CD8-positive, alpha-beta T cell (primary cell): ENCODE measurements at regions of chr1 and their contacts with region 1.

Region 1: DNA sequence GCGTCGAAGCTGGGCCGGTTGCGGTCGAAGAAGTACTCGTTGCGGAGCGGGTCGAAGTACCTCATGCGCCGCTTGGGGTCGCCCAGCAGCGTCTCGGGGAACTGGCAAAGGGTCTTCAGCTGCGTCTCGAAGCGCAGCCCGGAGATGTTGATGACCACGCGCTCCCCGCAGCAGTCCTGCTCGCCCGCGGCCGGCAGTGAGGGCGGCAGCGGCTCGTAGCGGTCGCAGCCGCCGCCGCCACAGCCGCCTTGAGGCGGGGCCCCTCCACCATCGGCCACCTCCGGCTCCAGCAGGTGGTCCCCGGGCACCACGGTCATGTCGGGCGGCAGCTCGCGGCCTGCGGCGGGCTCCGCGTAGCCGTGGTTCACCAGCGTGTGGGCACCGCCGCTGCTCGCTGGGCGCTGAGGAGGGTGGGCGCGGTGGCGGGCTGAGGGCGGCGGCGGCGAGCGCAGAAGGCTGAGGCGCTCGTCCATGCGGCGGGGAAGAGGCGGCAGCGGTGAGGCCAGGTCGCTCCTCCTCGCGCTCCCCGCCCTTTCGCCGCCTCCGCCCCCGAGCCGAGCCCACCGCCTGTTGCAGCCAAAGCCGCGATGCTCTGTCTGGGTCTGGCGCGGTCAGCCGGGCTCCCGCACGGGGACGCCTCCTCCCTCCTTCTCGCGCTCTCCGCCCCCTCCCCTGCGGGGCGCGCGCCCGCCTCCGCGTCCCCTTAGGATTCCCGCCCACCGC is at the start of gene KCNA3:
- DNase-seq: peak; percentile 52 to 87 (median 73)
- ATAC-seq: peak; percentile 42
- H3K4me3 ChIP-seq: peak within 1 kb of the TSS; percentile 75 to 97
- H3K4me3 Mint-ChIP-seq: peak within 1 kb of the TSS; percentile 100
- H3K27ac ChIP-seq: peak within 1 kb of the TSS; percentile 93 to 95
- H3K27ac Mint-ChIP-seq: peak within 1 kb of the TSS; percentile 99
- H3K4me1 ChIP-seq: peaks cover 22% of the 10 kb centered on the region
- H3K4me1 Mint-ChIP-seq: peaks cover 40% of the 10 kb centered on the region
- H3K27me3 ChIP-seq: no peaks in the 10 kb centered on the region
- H3K27me3 Mint-ChIP-seq: no peaks in the 10 kb centered on the region
- CTCF ChIP-seq: peak; percentile 28
- total RNA-seq, gene KCNA3: 83.6 to 85.1 TPM

Region 2: DNA sequence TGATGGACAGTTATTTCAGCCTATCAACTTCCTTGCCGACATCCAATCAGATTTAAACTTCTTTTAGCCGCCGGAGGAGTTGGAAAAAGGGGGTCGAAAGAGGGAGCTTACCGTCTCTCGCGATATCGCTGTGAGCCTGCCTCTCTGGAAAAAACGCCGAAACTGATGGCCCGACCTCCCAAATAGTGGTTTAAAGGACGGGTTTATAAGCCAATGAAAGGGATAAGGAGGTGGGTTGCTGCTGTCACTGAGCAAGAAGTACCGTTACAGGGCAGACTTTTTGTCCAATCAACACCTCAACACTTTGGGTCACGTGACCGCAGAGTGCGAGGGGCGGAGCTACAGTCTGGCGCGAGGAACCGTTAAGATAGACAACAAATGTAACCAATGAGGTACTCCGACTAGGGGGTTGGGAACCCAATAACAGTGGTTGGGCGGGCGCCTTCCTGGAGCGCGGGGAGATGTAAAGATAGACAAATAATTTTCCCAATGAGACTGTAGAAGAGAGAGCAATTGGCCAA is 335.6 kb before region 1 on chr1 and contains the start of gene RBM15:
- CTCF ChIA-PET with region 1: no interaction called
- POLR2A ChIA-PET with region 1: interaction called, 4 read pairs
- intact Hi-C with region 1: loop called in 1 of 2 experiments (anchors 2 kb)
- DNase-seq: peak; percentile 92 to 100 (median 96)
- ATAC-seq: peak; percentile 74
- H3K4me3 ChIP-seq: peak within 1 kb of the TSS; percentile 91 to 97
- H3K4me3 Mint-ChIP-seq: no peak within 1 kb of the TSS
- H3K27ac ChIP-seq: peak within 1 kb of the TSS; percentile 87 to 98
- H3K27ac Mint-ChIP-seq: no peak within 1 kb of the TSS
- H3K4me1 ChIP-seq: peaks cover 49% of the 10 kb centered on the region
- H3K4me1 Mint-ChIP-seq: peaks cover 56% of the 10 kb centered on the region
- H3K27me3 ChIP-seq: no peaks in the 10 kb centered on the region
- H3K27me3 Mint-ChIP-seq: no peaks in the 10 kb centered on the region
- CTCF ChIP-seq: no peak
- total RNA-seq, gene RBM15: 57.1 to 59.3 TPM

Region 3: DNA sequence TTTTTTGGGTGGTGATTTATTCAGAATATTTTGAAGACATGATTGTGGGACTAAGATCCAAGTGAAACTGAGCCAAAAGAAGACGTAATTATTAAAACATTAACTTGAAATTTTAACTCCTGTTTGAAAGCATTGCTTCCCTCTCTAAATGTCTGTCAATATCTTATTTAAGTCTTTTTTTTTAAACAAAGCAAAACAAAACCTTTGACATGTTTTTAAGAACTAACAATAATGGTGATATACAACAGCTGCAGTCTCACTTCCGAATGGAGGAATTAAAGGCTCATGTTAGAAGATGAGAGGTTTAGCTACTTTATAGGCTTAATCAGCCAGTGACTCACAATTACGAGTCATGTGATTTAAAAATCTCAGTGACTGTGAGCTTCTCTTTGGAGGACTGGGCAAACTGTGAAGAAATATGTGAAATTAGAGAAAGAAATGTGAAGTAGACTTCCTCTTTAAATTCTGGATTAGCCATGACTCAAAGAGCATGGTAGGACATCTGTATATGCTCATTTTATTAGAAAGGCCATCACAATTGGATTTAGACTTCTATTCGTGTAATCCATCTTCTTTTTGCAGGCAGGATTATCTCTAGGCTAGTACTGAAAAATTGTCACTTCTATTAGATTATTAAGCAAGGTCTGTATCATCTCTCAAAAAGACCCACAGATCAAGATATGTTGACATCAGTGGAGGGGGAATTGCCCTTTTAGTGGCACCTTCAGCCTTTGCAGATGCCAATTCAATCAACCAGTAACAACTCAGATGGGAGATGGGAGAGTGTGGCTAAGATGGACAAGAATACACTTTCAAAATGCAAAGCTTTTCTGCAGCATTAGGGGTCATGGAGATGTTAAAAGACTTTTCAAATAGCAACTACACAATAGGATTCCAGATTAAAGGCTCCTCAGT is 28.4 kb before region 1 on chr1:
- CTCF ChIA-PET with region 1: interaction called, 4 read pairs
- POLR2A ChIA-PET with region 1: interaction called, 37 read pairs
- intact Hi-C with region 1: loop called in 1 of 2 experiments (anchors 1 kb)
- DNase-seq: peak in 2 of 9 experiments; percentile 27 to 53
- ATAC-seq: peak; percentile 28
- H3K4me3 ChIP-seq: no peak overlapping the region
- H3K4me3 Mint-ChIP-seq: no peak overlapping the region
- H3K27ac ChIP-seq: peak overlapping the region in 1 of 2 experiments; percentile 70
- H3K27ac Mint-ChIP-seq: peak overlapping the region; percentile 28
- H3K4me1 ChIP-seq: peaks cover 77% of the 10 kb centered on the region
- H3K4me1 Mint-ChIP-seq: peaks cover 43% of the 10 kb centered on the region
- H3K27me3 ChIP-seq: no peaks in the 10 kb centered on the region
- H3K27me3 Mint-ChIP-seq: no peaks in the 10 kb centered on the region
- CTCF ChIP-seq: no peak

Region 4: DNA sequence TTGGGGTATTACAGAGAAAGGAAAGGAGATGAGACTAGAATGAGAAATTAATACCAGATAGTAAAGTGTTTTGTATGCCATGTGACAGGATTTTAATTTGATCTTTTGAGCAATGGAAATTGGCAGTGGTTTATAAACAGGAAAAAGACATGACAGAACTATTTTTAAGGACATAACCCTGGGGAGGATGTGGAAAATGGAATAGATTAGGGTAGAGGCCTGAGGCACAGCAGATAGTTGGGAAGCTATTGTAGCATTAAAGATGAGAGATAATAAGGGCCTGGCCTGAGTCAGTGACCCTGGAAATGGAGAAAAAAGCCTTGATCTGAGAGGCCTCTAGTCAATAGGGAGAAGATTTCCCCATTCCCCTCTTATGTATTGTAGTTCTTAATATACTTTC is 22.3 kb after region 1 on chr1:
- CTCF ChIA-PET with region 1: no interaction called
- POLR2A ChIA-PET with region 1: no interaction called
- intact Hi-C with region 1: no loop called
- DNase-seq: no peak
- ATAC-seq: no peak
- H3K4me3 ChIP-seq: no peak overlapping the region
- H3K4me3 Mint-ChIP-seq: no peak overlapping the region
- H3K27ac ChIP-seq: no peak overlapping the region
- H3K27ac Mint-ChIP-seq: no peak overlapping the region
- H3K4me1 ChIP-seq: no peaks in the 10 kb centered on the region
- H3K4me1 Mint-ChIP-seq: no peaks in the 10 kb centered on the region
- H3K27me3 ChIP-seq: no peaks in the 10 kb centered on the region
- H3K27me3 Mint-ChIP-seq: no peaks in the 10 kb centered on the region
- CTCF ChIP-seq: no peak

Region 5: DNA sequence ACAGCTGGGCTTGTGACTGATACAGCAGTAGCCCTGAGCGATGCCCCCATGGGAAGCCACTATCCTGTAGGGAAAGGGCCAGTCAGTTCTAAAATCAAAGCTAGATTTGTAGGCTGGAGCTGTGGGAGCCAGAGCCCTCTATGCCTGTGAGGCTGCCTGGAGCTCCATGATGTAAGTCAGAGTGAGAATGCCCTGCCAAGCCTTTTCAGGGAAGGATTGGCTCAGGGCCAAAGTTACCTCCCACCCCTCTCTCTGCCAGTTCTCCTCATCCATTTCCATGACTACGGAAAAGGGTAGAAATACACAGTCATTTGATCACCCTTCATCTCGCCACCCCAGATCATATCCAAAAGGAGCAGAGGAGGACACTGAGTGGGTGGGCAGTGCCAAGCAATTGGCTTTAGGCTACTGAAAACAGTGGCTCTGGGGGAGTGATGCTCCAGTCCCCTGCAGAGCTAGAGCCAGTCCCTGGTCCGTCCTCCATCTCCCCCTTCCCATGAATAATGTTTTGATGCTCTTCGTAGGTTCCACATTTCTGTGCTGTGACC is 59.7 kb after region 1 on chr1:
- CTCF ChIA-PET with region 1: no interaction called
- POLR2A ChIA-PET with region 1: no interaction called
- intact Hi-C with region 1: no loop called
- DNase-seq: no peak
- ATAC-seq: no peak
- H3K4me3 ChIP-seq: no peak overlapping the region
- H3K4me3 Mint-ChIP-seq: no peak overlapping the region
- H3K27ac ChIP-seq: no peak overlapping the region
- H3K27ac Mint-ChIP-seq: no peak overlapping the region
- H3K4me1 ChIP-seq: no peaks in the 10 kb centered on the region
- H3K4me1 Mint-ChIP-seq: no peaks in the 10 kb centered on the region
- H3K27me3 ChIP-seq: no peaks in the 10 kb centered on the region
- H3K27me3 Mint-ChIP-seq: no peaks in the 10 kb centered on the region
- CTCF ChIP-seq: no peak

Region 6: DNA sequence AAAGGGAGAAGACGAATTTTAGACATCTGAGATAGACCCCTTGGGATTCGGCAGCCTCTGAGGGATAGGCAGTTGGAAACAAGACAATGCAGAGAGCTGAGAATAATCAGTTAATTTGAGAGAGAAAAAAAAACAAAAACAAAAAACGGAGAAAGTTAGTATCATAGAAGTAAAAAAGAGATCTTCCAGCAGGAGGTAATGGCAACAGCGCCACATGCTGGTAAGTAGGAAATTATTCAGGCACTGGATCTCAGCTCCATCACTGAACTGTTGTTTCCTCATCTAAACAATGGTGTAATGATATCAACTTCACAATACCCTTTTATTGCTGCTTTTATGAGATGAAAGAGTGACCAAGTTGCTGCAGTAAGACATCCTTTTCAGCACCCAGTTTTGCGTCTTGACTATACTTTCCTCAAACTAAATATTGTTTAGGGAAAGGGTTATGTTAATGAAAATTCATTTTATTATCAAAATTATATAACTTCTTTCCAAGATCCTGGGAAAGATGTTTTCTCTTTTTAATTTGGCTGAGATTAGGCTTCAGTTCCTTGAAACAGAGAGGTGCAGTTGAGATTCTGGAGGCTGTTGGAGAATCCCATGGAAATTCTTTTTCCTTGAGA is 91.6 kb after region 1 on chr1:
- CTCF ChIA-PET with region 1: interaction called, 23 read pairs
- POLR2A ChIA-PET with region 1: interaction called, 5 read pairs
- intact Hi-C with region 1: loop called (anchors 1 to 5 kb)
- DNase-seq: peak; percentile 11 to 86 (median 55)
- ATAC-seq: peak; percentile 87
- H3K4me3 ChIP-seq: no peak overlapping the region
- H3K4me3 Mint-ChIP-seq: no peak overlapping the region
- H3K27ac ChIP-seq: no peak overlapping the region
- H3K27ac Mint-ChIP-seq: no peak overlapping the region
- H3K4me1 ChIP-seq: no peaks in the 10 kb centered on the region
- H3K4me1 Mint-ChIP-seq: peaks cover 2% of the 10 kb centered on the region
- H3K27me3 ChIP-seq: no peaks in the 10 kb centered on the region
- H3K27me3 Mint-ChIP-seq: peaks cover 10% of the 10 kb centered on the region
- CTCF ChIP-seq: peak; percentile 95

Region 7: GRCh38 chr1:111139956-111140679 is 465.6 kb after region 1 on chr1 and contains the starts of genes CEPT1 and DRAM2:
- CTCF ChIA-PET with region 1: no interaction called
- POLR2A ChIA-PET with region 1: no interaction called
- intact Hi-C with region 1: loop called (anchors 2 to 5 kb)
- DNase-seq: peak; percentile 86 to 96 (median 92)
- ATAC-seq: peak; percentile 74
- H3K4me3 ChIP-seq: peak within 1 kb of the TSS; percentile 89 to 97
- H3K4me3 Mint-ChIP-seq: peak within 1 kb of the TSS; percentile 100
- H3K27ac ChIP-seq: peak within 1 kb of the TSS; percentile 85 to 88
- H3K27ac Mint-ChIP-seq: peak within 1 kb of the TSS; percentile 100
- H3K4me1 ChIP-seq: peaks cover 51% of the 10 kb centered on the region
- H3K4me1 Mint-ChIP-seq: peaks cover 57% of the 10 kb centered on the region
- H3K27me3 ChIP-seq: no peaks in the 10 kb centered on the region
- H3K27me3 Mint-ChIP-seq: no peaks in the 10 kb centered on the region
- CTCF ChIP-seq: no peak
- total RNA-seq, gene CEPT1: 21.5 to 22.9 TPM
- total RNA-seq, gene DRAM2: 25.5 to 27.1 TPM

Region 8: DNA sequence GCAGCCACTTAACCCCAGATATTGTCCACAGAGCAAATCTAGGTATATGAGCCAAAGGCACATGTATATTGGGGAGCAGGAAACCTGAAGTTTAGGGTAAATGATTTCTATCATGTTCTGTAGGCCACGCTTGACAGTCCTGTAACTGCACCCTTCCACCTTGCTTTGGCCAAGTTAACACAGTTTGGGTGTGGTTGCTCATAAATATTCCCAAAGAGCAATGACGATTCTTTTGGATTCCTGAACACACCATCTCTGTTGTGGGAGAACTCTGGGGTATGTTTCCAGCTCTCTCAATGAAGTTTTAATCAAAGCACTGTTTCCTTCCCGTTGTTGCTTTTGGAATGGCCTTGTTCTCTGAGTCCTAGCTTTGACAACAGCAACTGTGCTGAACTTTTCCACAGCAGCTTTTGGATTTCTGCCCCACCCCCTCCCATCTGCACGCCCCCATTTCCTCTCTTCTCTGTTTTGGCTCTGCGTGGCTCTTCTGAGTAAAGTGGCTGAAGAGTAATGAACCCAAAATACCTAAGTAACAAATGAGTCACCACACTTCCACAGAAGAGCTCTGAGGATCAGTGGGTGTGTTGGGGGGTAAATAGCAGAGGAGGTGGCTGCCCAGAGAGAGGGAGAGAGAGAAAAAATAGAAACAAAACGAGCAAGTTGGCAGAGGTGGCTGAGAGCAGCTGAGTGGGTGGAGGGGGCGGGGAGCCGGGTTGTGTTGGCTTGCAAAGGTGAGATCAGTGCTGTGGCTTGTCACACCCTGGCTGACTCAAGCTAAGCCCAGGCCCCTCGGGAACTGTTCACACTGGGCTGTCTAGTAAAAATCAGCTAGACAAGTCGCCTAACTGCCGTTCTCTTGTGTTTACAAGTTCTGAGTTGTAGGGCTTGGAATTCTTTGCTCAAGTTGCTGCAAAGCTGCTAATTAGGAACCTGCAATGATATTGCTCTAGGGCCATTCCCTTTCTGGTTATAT is 918.2 kb after region 1 on chr1:
- CTCF ChIA-PET with region 1: no interaction called
- POLR2A ChIA-PET with region 1: no interaction called
- intact Hi-C with region 1: loop called in 1 of 2 experiments (anchors 10 kb)
- DNase-seq: peak; percentile 75 to 96 (median 92)
- ATAC-seq: peak; percentile 91
- H3K4me3 ChIP-seq: peak overlapping the region in 1 of 2 experiments; percentile 38
- H3K4me3 Mint-ChIP-seq: peak overlapping the region; percentile 53
- H3K27ac ChIP-seq: peak overlapping the region; percentile 48 to 72
- H3K27ac Mint-ChIP-seq: peak overlapping the region; percentile 89
- H3K4me1 ChIP-seq: peaks cover 64% of the 10 kb centered on the region
- H3K4me1 Mint-ChIP-seq: peaks cover 58% of the 10 kb centered on the region
- H3K27me3 ChIP-seq: no peaks in the 10 kb centered on the region
- H3K27me3 Mint-ChIP-seq: no peaks in the 10 kb centered on the region
- CTCF ChIP-seq: no peak